GM12878 (cell line): ENCODE measurements at regions of chr12 and their contacts with region 1.

Region 1: DNA sequence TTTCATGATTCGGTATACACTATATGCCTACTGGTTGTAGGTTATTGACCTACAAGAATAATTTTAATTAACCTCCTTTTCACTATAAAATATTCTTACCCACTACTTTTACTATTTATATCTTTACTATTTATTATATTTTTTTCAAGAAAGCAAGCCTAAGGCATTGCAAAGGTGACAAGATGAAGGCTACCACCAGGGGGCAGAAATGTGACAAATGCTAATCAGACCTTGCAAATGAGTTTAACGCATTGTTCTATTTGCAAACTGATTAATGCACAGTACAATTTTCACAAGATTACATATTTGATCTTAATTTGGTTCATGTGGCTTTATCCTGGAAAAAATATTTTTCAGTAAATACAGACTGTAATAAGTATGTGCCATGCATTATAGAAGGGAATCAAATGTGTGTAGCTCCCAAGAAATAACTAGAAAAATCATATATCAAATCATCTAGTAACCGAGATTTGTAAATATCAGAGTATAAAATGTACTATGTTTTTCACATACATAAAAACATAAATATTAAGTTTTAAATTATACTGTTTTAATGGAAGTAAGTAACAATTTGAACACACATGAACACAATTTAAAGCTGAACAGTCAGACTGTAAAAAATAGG is 107.0 kb downstream of the ADAMTS20 start:
- DNase-seq: peak; percentile 4
- ATAC-seq: peak; percentile 73
- H3K4me3 ChIP-seq: no peak overlapping the region
- H3K27ac ChIP-seq: no peak overlapping the region
- H3K4me1 ChIP-seq: no peaks in the 10 kb centered on the region
- H3K27me3 ChIP-seq: no peaks in the 10 kb centered on the region
- CTCF ChIP-seq: peak; percentile 58 to 81 (median 71); a peak in 5 of 6 replicates
- EP300 ChIP-seq: no peak
- POLR2A ChIP-seq: no peak
- RAD21 ChIP-seq: peak; percentile 61

Region 2: GRCh38 chr12:42859612-42860011 is 585.4 kb before region 1 on chr12:
- CTCF ChIA-PET with region 1: no interaction called
- POLR2A ChIA-PET with region 1: no interaction called
- RAD21 ChIA-PET with region 1: no interaction called
- SMC1A ChIA-PET with region 1: no interaction called
- in situ Hi-C with region 1: no loop called
- intact Hi-C with region 1: no loop called
- DNase-seq: no peak
- ATAC-seq: no peak
- H3K4me3 ChIP-seq: no peak overlapping the region
- H3K27ac ChIP-seq: no peak overlapping the region
- H3K4me1 ChIP-seq: no peaks in the 10 kb centered on the region
- H3K27me3 ChIP-seq: no peaks in the 10 kb centered on the region
- CTCF ChIP-seq: no peak
- EP300 ChIP-seq: no peak
- POLR2A ChIP-seq: no peak
- RAD21 ChIP-seq: no peak

Region 3: DNA sequence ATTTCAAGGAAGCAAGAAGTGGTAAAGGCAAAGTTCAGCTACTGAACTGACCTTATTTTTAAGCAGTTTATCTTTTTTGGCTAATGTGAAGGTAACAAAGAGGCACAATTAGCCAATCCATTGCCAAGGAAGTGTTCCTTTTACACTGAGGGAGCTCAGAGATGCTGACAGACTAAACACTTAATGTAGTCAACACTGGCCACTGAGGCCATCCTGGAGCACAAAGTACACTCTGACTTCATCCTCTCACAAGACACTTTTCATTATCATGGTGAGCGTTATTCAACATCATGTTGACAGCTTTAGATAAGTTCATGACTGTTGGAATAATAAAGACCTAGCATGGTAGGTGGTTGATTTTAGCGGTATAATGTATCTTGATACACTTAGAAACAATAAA is 17.0 kb after region 1 on chr12:
- CTCF ChIA-PET with region 1: interaction called, 10 read pairs
- POLR2A ChIA-PET with region 1: no interaction called
- RAD21 ChIA-PET with region 1: interaction called, 5 read pairs
- SMC1A ChIA-PET with region 1: interaction called, 3 read pairs
- in situ Hi-C with region 1: no loop called
- intact Hi-C with region 1: no loop called
- DNase-seq: no peak
- ATAC-seq: no peak
- H3K4me3 ChIP-seq: no peak overlapping the region
- H3K27ac ChIP-seq: no peak overlapping the region
- H3K4me1 ChIP-seq: no peaks in the 10 kb centered on the region
- H3K27me3 ChIP-seq: no peaks in the 10 kb centered on the region
- CTCF ChIP-seq: no peak
- EP300 ChIP-seq: no peak
- POLR2A ChIP-seq: no peak
- RAD21 ChIP-seq: no peak

Region 4: GRCh38 chr12:43676183-43676813 is 231.2 kb after region 1 on chr12:
- CTCF ChIA-PET with region 1: interaction called, 3 read pairs
- POLR2A ChIA-PET with region 1: no interaction called
- RAD21 ChIA-PET with region 1: no interaction called
- SMC1A ChIA-PET with region 1: interaction called, 3 read pairs
- in situ Hi-C with region 1: no loop called
- intact Hi-C with region 1: loop called (anchors 2 kb)
- DNase-seq: peak; percentile 8
- ATAC-seq: peak; percentile 96
- H3K4me3 ChIP-seq: no peak overlapping the region
- H3K27ac ChIP-seq: no peak overlapping the region
- H3K4me1 ChIP-seq: no peaks in the 10 kb centered on the region
- H3K27me3 ChIP-seq: no peaks in the 10 kb centered on the region
- CTCF ChIP-seq: peak; percentile 63 to 77 (median 74)
- EP300 ChIP-seq: no peak
- POLR2A ChIP-seq: no peak
- RAD21 ChIP-seq: peak; percentile 52

Region 5: GRCh38 chr12:43728117-43728516 is 283.1 kb after region 1 on chr12:
- CTCF ChIA-PET with region 1: interaction called, 5 read pairs
- POLR2A ChIA-PET with region 1: no interaction called
- RAD21 ChIA-PET with region 1: no interaction called
- SMC1A ChIA-PET with region 1: interaction called, 3 read pairs
- in situ Hi-C with region 1: no loop called
- intact Hi-C with region 1: loop called (anchors 5 kb)
- DNase-seq: no peak
- ATAC-seq: no peak
- H3K4me3 ChIP-seq: no peak overlapping the region
- H3K27ac ChIP-seq: no peak overlapping the region
- H3K4me1 ChIP-seq: no peaks in the 10 kb centered on the region
- H3K27me3 ChIP-seq: no peaks in the 10 kb centered on the region
- CTCF ChIP-seq: no peak; a peak in 1 of 6 replicates
- EP300 ChIP-seq: no peak
- POLR2A ChIP-seq: no peak
- RAD21 ChIP-seq: no peak